B cell (primary cell): ENCODE measurements at regions of chr4 and their contacts with region 1.

Region 1: GRCh38 chr4:48127682-48128394 is 6.2 kb downstream of the TXK start:
- DNase-seq: peak; percentile 69
- ATAC-seq: peak; percentile 79
- H3K4me3 ChIP-seq: no peak overlapping the region
- H3K4me3 Mint-ChIP-seq: peak overlapping the region; percentile 42
- H3K27ac ChIP-seq: no peak overlapping the region
- H3K27ac Mint-ChIP-seq: peak overlapping the region; percentile 22
- H3K4me1 ChIP-seq: peaks cover 10 to 12% of the 10 kb centered on the region in 2 donors
- H3K4me1 Mint-ChIP-seq: peaks cover 19% of the 10 kb centered on the region
- H3K27me3 ChIP-seq: no peaks in the 10 kb centered on the region
- H3K27me3 Mint-ChIP-seq: peaks cover 5% of the 10 kb centered on the region
- CTCF ChIP-seq: peak; percentile 62

Region 2: GRCh38 chr4:47990145-47990544 is 137.7 kb before region 1 on chr4:
- CTCF ChIA-PET with region 1: no interaction called
- POLR2A ChIA-PET with region 1: no interaction called
- intact Hi-C with region 1: no loop called
- DNase-seq: no peak
- ATAC-seq: no peak
- H3K4me3 ChIP-seq: no peak overlapping the region
- H3K4me3 Mint-ChIP-seq: no peak overlapping the region
- H3K27ac ChIP-seq: no peak overlapping the region
- H3K27ac Mint-ChIP-seq: no peak overlapping the region
- H3K4me1 ChIP-seq: no peaks in the 10 kb centered on the region
- H3K4me1 Mint-ChIP-seq: no peaks in the 10 kb centered on the region
- H3K27me3 ChIP-seq: peaks cover 0 to 6% (median 1%) of the 10 kb centered on the region in 4 experiments
- H3K27me3 Mint-ChIP-seq: peaks cover 20% of the 10 kb centered on the region
- CTCF ChIP-seq: no peak

Region 3: DNA sequence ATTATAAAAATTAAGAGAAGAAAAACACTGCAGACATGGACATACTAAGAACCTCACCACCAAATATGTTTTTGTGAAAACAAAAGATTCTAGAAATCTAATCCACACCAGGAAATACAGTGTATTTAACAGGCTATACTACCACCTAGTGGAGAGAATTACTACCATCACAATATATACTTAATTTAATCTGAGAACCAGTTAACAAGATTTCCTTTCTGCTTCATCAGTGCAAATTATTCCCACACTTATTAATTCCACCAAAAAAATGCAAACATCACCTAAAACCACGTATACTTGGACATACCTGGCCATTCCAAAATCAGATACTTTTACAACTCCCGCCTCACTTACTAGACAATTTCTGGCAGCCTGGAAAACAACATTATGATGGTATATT is 13.2 kb after region 1 on chr4:
- CTCF ChIA-PET with region 1: interaction called, 82 read pairs
- POLR2A ChIA-PET with region 1: no interaction called
- intact Hi-C with region 1: loop called (anchors 1 kb)
- DNase-seq: peak; percentile 53
- ATAC-seq: peak; percentile 37
- H3K4me3 ChIP-seq: no peak overlapping the region
- H3K4me3 Mint-ChIP-seq: no peak overlapping the region
- H3K27ac ChIP-seq: no peak overlapping the region
- H3K27ac Mint-ChIP-seq: no peak overlapping the region
- H3K4me1 ChIP-seq: peaks cover 27 to 31% of the 10 kb centered on the region in 2 donors
- H3K4me1 Mint-ChIP-seq: peaks cover 34% of the 10 kb centered on the region
- H3K27me3 ChIP-seq: no peaks in the 10 kb centered on the region
- H3K27me3 Mint-ChIP-seq: no peaks in the 10 kb centered on the region
- CTCF ChIP-seq: peak; percentile 84

Region 4: GRCh38 chr4:48275247-48275646 is 147.4 kb after region 1 on chr4:
- CTCF ChIA-PET with region 1: interaction called, 56 read pairs
- POLR2A ChIA-PET with region 1: no interaction called
- intact Hi-C with region 1: loop called (anchors 1 kb)
- DNase-seq: peak; percentile 48
- ATAC-seq: peak; percentile 56
- H3K4me3 ChIP-seq: no peak overlapping the region
- H3K4me3 Mint-ChIP-seq: no peak overlapping the region
- H3K27ac ChIP-seq: no peak overlapping the region
- H3K27ac Mint-ChIP-seq: no peak overlapping the region
- H3K4me1 ChIP-seq: peaks cover 7 to 8% of the 10 kb centered on the region in 2 donors
- H3K4me1 Mint-ChIP-seq: peaks cover 13% of the 10 kb centered on the region
- H3K27me3 ChIP-seq: no peaks in the 10 kb centered on the region
- H3K27me3 Mint-ChIP-seq: no peaks in the 10 kb centered on the region
- CTCF ChIP-seq: peak; percentile 42

Region 5: GRCh38 chr4:48290146-48290772 is 162.4 kb after region 1 on chr4:
- CTCF ChIA-PET with region 1: interaction called, 3 read pairs
- POLR2A ChIA-PET with region 1: no interaction called
- intact Hi-C with region 1: loop called (anchors 1 kb)
- DNase-seq: peak; percentile 36
- ATAC-seq: no peak
- H3K4me3 ChIP-seq: no peak overlapping the region
- H3K4me3 Mint-ChIP-seq: no peak overlapping the region
- H3K27ac ChIP-seq: no peak overlapping the region
- H3K27ac Mint-ChIP-seq: no peak overlapping the region
- H3K4me1 ChIP-seq: no peaks in the 10 kb centered on the region
- H3K4me1 Mint-ChIP-seq: no peaks in the 10 kb centered on the region
- H3K27me3 ChIP-seq: no peaks in the 10 kb centered on the region
- H3K27me3 Mint-ChIP-seq: no peaks in the 10 kb centered on the region
- CTCF ChIP-seq: peak; percentile 75